OCI-LY7 (cell line): ENCODE measurements at regions of chr19 and their contacts with region 1.

Region 1: GRCh38 chr19:42132851-42133528 is 744 bp upstream of the POU2F2 start:
- DNase-seq: peak; percentile 92
- H3K4me3 ChIP-seq: peak overlapping the region; percentile 96
- H3K27ac ChIP-seq: peak overlapping the region; percentile 93
- H3K4me1 ChIP-seq: peaks cover 63% of the 10 kb centered on the region
- CTCF ChIP-seq: peak; percentile 90

Region 2: DNA sequence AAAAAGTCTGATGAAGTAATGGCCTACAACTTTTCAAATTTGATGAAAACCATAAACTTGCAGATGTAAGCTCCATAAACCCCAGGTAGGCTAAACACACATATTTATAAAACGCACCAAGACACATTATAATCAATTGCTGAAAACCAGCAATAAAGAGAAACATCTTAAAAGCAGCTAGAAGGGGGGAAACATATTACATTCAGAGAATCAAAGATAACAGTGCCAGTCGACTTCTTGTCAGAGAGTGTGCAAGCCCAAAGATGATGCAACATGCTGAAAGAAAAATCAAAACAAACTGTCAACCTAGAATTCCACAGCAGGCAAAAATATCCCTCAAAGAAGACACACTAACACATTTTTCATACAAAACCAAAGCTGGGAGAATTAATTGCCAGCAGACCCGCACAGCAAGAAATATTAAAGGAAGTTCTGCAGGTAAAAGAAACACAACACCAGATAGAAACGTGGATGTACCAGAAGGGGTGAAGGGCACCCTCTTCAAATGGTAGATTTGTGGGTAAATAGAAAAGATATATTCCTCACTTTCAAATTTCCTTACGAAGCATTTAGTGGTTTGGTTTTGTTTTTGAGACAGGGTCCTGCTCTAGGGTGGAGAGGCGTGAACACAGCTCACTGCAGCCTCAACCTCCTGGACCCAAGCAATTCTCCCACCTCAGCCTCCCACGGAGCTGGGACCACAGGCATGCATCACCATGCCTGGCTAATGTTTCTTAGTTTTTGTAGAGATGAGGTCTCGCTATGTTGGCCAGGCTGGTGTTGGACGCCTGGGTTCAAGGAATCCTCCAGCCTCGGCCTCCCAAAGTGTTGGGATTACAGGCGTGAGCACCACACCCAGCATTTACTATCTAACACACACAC is 122.5 kb before region 1 on chr19:
- CTCF ChIA-PET with region 1: no interaction called
- POLR2A ChIA-PET with region 1: no interaction called
- intact Hi-C with region 1: no loop called
- DNase-seq: peak; percentile 17
- H3K4me3 ChIP-seq: no peak overlapping the region
- H3K27ac ChIP-seq: no peak overlapping the region
- H3K4me1 ChIP-seq: no peaks in the 10 kb centered on the region
- CTCF ChIP-seq: no peak

Region 3: DNA sequence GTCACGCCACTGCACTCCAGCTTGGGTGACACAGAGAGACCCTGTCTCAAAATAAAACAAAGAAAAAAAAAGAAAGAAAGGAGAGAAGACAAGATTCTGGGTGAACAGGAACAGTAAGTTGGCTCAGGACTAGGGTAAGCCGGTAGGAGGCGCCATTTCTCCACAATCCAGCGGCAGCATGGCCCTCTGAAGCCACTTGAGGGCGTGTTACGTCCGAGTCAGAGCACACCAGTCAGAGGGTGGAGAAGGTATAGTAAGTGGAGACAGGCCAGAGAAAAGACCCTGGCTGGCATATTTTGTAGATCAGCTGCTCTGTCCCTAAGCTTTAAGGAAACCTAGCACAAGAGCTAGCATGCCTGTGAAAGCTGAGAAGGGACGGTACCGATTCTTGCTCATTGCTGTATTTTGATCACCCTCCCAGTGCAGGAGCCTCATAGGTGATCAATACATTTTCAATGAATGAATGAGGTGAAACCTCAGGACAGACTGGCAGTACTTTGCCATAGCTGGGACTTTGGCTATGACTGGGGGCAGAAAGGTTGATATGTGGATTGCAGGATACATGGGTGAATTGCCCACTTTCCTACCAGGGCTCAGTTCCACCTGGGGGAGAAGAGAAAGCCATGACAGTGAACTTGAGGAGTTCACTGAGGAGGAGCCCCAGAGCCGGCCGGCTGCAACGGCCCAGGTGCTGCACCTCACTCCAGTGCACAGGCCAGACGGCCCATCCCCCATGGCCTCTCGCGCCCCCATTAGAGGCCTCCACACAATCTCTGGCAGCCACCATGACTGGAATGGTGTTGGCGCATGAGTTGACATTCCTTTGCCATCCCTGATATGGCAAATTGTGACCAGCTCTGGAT is 24.2 kb before region 1 on chr19:
- CTCF ChIA-PET with region 1: interaction called, 9 read pairs
- POLR2A ChIA-PET with region 1: interaction called, 17 read pairs
- intact Hi-C with region 1: loop called (anchors 1 kb)
- DNase-seq: peak; percentile 95
- H3K4me3 ChIP-seq: peak overlapping the region; percentile 46
- H3K27ac ChIP-seq: peak overlapping the region; percentile 87
- H3K4me1 ChIP-seq: peaks cover 60% of the 10 kb centered on the region
- CTCF ChIP-seq: peak; percentile 100

Region 4: DNA sequence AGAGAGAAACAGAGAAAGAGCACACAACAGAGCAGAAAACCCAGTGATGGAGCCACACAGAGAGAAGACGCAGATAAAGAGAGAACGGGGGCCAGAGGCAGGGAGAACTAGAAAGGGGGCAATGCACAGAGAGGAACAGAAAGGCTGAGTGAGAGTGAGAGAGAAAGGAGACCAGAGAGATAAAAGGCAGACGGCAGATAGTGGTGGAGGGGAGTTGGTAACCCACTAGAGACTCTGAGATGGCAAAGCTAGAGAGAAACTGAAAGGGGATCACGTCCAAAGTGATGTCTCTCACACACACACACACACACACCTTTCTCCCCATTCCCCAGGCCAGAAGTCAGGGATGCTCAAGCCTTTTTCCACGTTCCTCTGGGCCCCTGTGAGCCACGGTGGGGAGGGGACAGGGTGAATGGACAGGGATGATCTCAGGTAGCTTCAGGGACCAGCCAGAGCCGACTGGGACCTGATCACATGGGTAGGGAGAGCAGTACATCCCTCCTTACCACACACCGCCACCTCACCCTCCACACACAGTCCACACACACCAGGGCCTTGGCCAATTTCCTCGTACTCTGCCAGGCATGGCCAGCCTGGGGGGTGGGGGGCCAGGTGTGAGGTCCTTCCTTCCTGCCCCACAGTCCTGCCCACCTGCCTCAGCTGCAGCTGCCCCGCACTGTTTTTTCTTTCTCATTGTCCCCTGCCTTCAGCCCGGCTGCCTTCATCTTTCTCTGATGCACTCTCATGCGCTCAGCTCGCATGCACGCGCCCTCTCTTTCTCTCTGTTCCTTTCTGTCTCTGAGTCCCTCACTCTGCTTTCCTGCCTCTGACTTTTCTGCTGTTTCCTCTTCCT is 21.7 kb after region 1 on chr19:
- CTCF ChIA-PET with region 1: no interaction called
- POLR2A ChIA-PET with region 1: no interaction called
- intact Hi-C with region 1: loop called (anchors 2 kb)
- DNase-seq: peak; percentile 62
- H3K4me3 ChIP-seq: no peak overlapping the region
- H3K27ac ChIP-seq: peak overlapping the region; percentile 21
- H3K4me1 ChIP-seq: peaks cover 16% of the 10 kb centered on the region
- CTCF ChIP-seq: no peak

Region 5: GRCh38 chr19:42184401-42184861 is 51.4 kb after region 1 on chr19:
- CTCF ChIA-PET with region 1: no interaction called
- POLR2A ChIA-PET with region 1: interaction called, 4 read pairs
- intact Hi-C with region 1: loop called (anchors 1 kb)
- DNase-seq: peak; percentile 82
- H3K4me3 ChIP-seq: no peak overlapping the region
- H3K27ac ChIP-seq: no peak overlapping the region
- H3K4me1 ChIP-seq: peaks cover 39% of the 10 kb centered on the region
- CTCF ChIP-seq: peak; percentile 99

Region 6: GRCh38 chr19:42268704-42269477 is 135.9 kb after region 1 on chr19 and contains the start of gene CIC:
- CTCF ChIA-PET with region 1: no interaction called
- POLR2A ChIA-PET with region 1: no interaction called
- intact Hi-C with region 1: no loop called
- DNase-seq: peak; percentile 100
- H3K4me3 ChIP-seq: peak within 1 kb of the TSS; percentile 73
- H3K27ac ChIP-seq: peak within 1 kb of the TSS; percentile 75
- H3K4me1 ChIP-seq: peaks cover 32% of the 10 kb centered on the region
- CTCF ChIP-seq: no peak
- total RNA-seq, gene CIC: 20.7 and 26.8 TPM in 2 replicates

Region 7: GRCh38 chr19:42283143-42284065 is 150.4 kb after region 1 on chr19:
- CTCF ChIA-PET with region 1: no interaction called
- POLR2A ChIA-PET with region 1: interaction called, 5 read pairs
- intact Hi-C with region 1: loop called (anchors 1 kb)
- DNase-seq: peak; percentile 97
- H3K4me3 ChIP-seq: peak overlapping the region; percentile 69
- H3K27ac ChIP-seq: peak overlapping the region; percentile 82
- H3K4me1 ChIP-seq: peaks cover 59% of the 10 kb centered on the region
- CTCF ChIP-seq: peak; percentile 33; the same call in 1 of the 2 replicates